ENCODE measurements at regions of chr16 and their contacts with region 1.

Region 1: GRCh38 chr16:87387942-87388817 is 4.0 kb upstream of the MAP1LC3B start:
- DNase-seq: peak; percentile 89 to 98 (median 92)
- H3K4me3 ChIP-seq: peak overlapping the region in 1 of 2 donors; percentile 9
- H3K4me3 Mint-ChIP-seq: peak overlapping the region; percentile 48 to 83 (median 66)
- H3K27ac ChIP-seq: peak overlapping the region; percentile 64
- H3K27ac Mint-ChIP-seq: peak overlapping the region; percentile 91 to 98 (median 95)
- H3K4me1 ChIP-seq: peaks cover 46% of the 10 kb centered on the region
- H3K4me1 Mint-ChIP-seq: peaks cover 22 to 57% (median 40%) of the 10 kb centered on the region in 4 donors
- H3K27me3 ChIP-seq: no peaks in the 10 kb centered on the region
- H3K27me3 Mint-ChIP-seq: peaks cover 0 to 3% of the 10 kb centered on the region in 2 donors

Region 2: DNA sequence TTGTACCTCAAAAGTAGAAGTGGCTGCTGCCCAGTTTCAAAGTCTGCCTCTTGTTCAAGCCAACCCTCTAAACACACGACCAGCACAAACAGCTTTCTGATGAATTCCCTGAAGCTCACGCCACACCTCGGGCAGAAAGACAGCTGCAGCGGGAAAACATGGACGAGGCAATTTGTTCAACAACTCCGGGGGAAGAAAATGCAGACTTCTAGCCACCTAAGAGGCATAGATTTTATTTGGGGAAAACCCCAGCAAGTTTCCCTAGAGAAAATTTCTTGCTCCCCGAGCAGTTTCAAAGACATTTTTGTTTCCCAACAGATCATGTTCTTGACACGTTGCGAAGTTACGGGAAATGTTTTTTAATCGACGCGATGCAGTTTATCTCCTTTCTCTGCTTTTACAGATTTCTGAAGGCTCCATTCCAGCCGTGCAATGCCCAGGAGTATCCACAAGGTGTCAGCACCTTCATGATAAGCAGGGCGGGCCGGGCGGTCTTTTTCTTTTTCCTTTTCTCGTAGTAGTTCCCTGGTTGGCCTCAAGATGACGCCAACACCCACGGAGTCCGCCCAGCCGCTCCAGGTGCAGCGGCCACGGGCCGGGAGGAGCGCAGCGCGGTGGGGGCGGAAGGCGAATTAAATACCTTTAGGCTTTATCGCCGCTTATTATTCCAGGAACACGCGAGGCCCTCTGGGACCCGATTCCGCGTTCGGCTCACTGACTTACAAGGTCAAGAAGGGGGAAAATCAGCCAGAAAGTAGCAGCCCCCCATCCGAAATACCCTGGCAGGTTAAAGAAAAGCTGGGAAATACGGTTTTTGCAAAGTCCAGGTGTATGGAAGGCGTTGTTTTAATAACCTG is 824.5 kb before region 1 on chr16:
- CTCF ChIA-PET with region 1: no interaction called
- POLR2A ChIA-PET with region 1: no interaction called
- intact Hi-C with region 1: loop called (anchors 2 kb)
- DNase-seq: peak; percentile 80 to 88 (median 83)
- H3K4me3 ChIP-seq: peak overlapping the region; percentile 34 to 52
- H3K4me3 Mint-ChIP-seq: peak overlapping the region; percentile 34 to 80 (median 70)
- H3K27ac ChIP-seq: no peak overlapping the region
- H3K27ac Mint-ChIP-seq: peak overlapping the region in 2 of 7 donors; percentile 29 to 38
- H3K4me1 ChIP-seq: peaks cover 18% of the 10 kb centered on the region
- H3K4me1 Mint-ChIP-seq: peaks cover 10 to 30% (median 22%) of the 10 kb centered on the region in 4 donors
- H3K27me3 ChIP-seq: peaks cover 23% of the 10 kb centered on the region
- H3K27me3 Mint-ChIP-seq: peaks cover 32 to 54% of the 10 kb centered on the region in 2 donors

Region 3: GRCh38 chr16:87324411-87325275 is 63.5 kb before region 1 on chr16:
- CTCF ChIA-PET with region 1: interaction called, 41 read pairs
- POLR2A ChIA-PET with region 1: interaction called, 48 read pairs
- intact Hi-C with region 1: no loop called
- DNase-seq: peak in 4 of 5 donors; percentile 31 to 45 (median 34)
- H3K4me3 ChIP-seq: no peak overlapping the region
- H3K4me3 Mint-ChIP-seq: no peak overlapping the region
- H3K27ac ChIP-seq: no peak overlapping the region
- H3K27ac Mint-ChIP-seq: peak overlapping the region in 1 of 7 donors; percentile 57
- H3K4me1 ChIP-seq: peaks cover 4% of the 10 kb centered on the region
- H3K4me1 Mint-ChIP-seq: peaks cover 3 to 9% (median 4%) of the 10 kb centered on the region in 4 donors
- H3K27me3 ChIP-seq: no peaks in the 10 kb centered on the region
- H3K27me3 Mint-ChIP-seq: no peaks in the 10 kb centered on the region

Region 4: GRCh38 chr16:87374313-87374712 is 13.9 kb before region 1 on chr16:
- CTCF ChIA-PET with region 1: no interaction called
- POLR2A ChIA-PET with region 1: interaction called, 10 read pairs
- intact Hi-C with region 1: no loop called
- DNase-seq: no peak
- H3K4me3 ChIP-seq: no peak overlapping the region
- H3K4me3 Mint-ChIP-seq: no peak overlapping the region
- H3K27ac ChIP-seq: no peak overlapping the region
- H3K27ac Mint-ChIP-seq: no peak overlapping the region
- H3K4me1 ChIP-seq: peaks cover 25% of the 10 kb centered on the region
- H3K4me1 Mint-ChIP-seq: peaks cover 27 to 68% (median 29%) of the 10 kb centered on the region in 4 donors
- H3K27me3 ChIP-seq: no peaks in the 10 kb centered on the region
- H3K27me3 Mint-ChIP-seq: no peaks in the 10 kb centered on the region

Region 5: GRCh38 chr16:87416826-87417527 is 28.8 kb after region 1 on chr16:
- CTCF ChIA-PET with region 1: no interaction called
- POLR2A ChIA-PET with region 1: no interaction called
- intact Hi-C with region 1: no loop called
- DNase-seq: peak in 2 of 5 donors; percentile 23 to 40
- H3K4me3 ChIP-seq: no peak overlapping the region
- H3K4me3 Mint-ChIP-seq: no peak overlapping the region
- H3K27ac ChIP-seq: no peak overlapping the region
- H3K27ac Mint-ChIP-seq: peak overlapping the region in 1 of 7 donors; percentile 63
- H3K4me1 ChIP-seq: no peaks in the 10 kb centered on the region
- H3K4me1 Mint-ChIP-seq: no peaks in the 10 kb centered on the region
- H3K27me3 ChIP-seq: no peaks in the 10 kb centered on the region
- H3K27me3 Mint-ChIP-seq: no peaks in the 10 kb centered on the region

Region 6: GRCh38 chr16:87765776-87766484 is 377.8 kb after region 1 on chr16 and contains the start of gene KLHDC4:
- CTCF ChIA-PET with region 1: no interaction called
- POLR2A ChIA-PET with region 1: interaction called, 6 read pairs
- intact Hi-C with region 1: loop called (anchors 5 kb)
- DNase-seq: peak; percentile 87 to 91 (median 88)
- H3K4me3 ChIP-seq: peak within 1 kb of the TSS; percentile 7 to 80
- H3K4me3 Mint-ChIP-seq: peak within 1 kb of the TSS; percentile 97 to 100 (median 100)
- H3K27ac ChIP-seq: peak within 1 kb of the TSS; percentile 85
- H3K27ac Mint-ChIP-seq: peak within 1 kb of the TSS; percentile 98 to 100 (median 99)
- H3K4me1 ChIP-seq: peaks cover 44% of the 10 kb centered on the region
- H3K4me1 Mint-ChIP-seq: peaks cover 25 to 51% (median 39%) of the 10 kb centered on the region in 4 donors
- H3K27me3 ChIP-seq: no peaks in the 10 kb centered on the region
- H3K27me3 Mint-ChIP-seq: no peaks in the 10 kb centered on the region
- total RNA-seq, gene KLHDC4: 82.4 to 90.0 TPM